ENCODE measurements at regions of chr6 and their contacts with region 1.

Region 1: GRCh38 chr6:27374824-27375612 is 13.5 kb upstream of the ZNF391 start:
- DNase-seq: peak; percentile 86 to 87
- H3K4me3 ChIP-seq: peak overlapping the region; percentile 88
- H3K27ac ChIP-seq: peak overlapping the region; percentile 40
- H3K4me1 ChIP-seq: peaks cover 11% of the 10 kb centered on the region
- H3K27me3 ChIP-seq: no peaks in the 10 kb centered on the region
- CTCF ChIP-seq: no peak

Region 2: DNA sequence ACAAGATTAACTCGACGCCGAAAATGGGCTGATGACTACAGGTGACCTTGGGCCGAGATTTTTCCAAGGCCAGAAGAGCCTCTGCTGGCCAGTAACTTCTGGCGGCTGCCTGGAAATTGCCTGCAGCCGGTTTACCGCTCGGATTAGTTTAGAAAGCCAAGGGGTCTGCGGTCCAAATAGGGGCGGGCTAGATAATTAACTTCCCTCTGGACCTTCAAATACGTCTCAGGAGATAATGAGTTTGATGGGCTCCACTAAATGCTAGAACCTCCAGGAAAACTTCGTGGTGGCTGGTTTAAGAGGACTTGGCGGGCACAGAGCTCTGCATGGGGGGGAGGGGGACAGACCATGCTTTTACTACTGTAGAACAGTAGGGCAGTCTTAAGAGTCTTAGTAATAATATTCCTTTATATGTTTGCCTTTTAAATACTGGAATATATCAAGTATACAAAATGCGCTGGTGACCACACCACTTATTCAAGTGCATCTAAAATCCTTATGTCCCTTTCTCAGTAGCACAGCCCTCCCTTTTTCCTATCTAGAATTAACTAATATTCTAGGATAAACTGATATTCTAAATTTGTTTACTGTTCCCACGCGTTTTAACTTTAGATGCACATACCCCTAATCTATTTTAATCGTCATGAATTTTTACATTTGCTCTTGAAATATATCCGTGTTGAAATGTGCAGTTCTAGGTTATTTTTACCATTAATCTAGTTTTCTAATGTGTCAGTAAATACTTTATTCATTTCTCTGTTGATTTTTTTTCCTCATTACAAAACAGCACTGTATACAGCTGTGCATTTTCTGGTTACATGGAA is 235.1 kb before region 1 on chr6:
- CTCF ChIA-PET with region 1: no interaction called
- POLR2A ChIA-PET with region 1: interaction called, 15 read pairs
- intact Hi-C with region 1: no loop called
- DNase-seq: no peak
- H3K4me3 ChIP-seq: peak overlapping the region; percentile 60
- H3K27ac ChIP-seq: peak overlapping the region; percentile 53
- H3K4me1 ChIP-seq: peaks cover 18% of the 10 kb centered on the region
- H3K27me3 ChIP-seq: no peaks in the 10 kb centered on the region
- CTCF ChIP-seq: no peak

Region 3: DNA sequence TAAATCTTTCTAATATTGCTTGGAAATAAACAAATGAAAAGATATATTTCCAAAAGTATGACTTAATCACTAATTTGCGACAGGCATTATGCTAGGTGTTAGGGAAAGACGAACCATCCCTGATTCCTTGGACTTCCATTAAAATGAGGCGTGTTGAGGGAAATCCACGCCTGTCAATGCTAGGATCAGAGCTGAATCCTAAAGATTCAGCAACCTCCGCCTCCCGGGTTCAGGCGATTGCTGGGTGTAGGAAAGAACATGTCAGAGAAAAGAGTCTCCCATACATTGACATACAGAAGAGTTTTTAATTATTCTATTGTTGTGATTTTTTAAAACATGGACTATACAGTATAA is 144.3 kb before region 1 on chr6:
- CTCF ChIA-PET with region 1: no interaction called
- POLR2A ChIA-PET with region 1: no interaction called
- intact Hi-C with region 1: no loop called
- DNase-seq: peak; percentile 25 to 41
- H3K4me3 ChIP-seq: peak overlapping the region; percentile 53
- H3K27ac ChIP-seq: peak overlapping the region; percentile 22; the same call in 1 of the 2 replicates
- H3K4me1 ChIP-seq: peaks cover 9% of the 10 kb centered on the region; the same call in 1 of the 2 replicates
- H3K27me3 ChIP-seq: no peaks in the 10 kb centered on the region
- CTCF ChIP-seq: no peak

Region 4: DNA sequence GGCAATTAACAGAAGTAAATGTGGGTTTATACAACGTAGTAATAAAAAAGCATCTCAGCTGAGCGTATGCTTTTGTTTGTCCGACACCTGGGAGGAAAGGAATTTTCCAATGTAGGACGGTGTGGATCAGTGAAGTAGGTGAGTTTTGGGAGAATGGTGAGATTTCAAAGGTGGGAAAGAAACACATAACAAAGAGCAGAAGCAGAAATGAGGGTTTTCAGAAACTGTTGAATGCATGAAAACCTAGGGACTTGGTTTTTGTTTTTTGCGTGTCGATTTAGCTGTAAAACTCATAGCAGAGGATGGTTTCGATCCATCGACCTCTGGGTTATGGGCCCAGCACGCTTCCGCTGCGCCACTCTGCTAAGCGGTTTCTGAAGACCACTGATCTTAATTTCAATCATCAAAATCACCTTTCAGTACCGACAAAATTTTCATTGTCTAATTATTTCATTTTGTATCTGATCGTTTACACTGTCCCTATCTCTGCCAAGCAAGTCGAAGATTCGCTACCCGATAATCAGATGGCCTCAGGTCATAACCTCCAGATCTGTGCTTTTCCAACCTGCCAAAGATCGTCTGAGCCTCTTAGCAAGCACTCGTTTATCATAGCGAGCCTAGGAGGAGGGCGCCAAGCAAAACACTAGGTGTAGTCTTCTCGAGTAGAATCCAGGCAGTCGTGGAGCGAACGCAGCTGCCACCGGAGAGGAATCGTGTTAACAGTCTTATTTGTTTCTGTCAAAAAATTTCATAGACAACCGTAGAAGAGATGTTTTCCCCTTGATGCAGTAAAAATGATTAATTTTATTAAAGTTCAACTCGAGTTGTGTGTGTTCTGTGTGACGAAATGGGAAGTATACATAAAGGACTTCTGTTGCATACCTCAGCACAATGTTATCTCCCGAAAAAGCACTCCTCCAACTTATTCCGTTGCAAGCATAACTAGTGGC is 42.1 kb before region 1 on chr6:
- CTCF ChIA-PET with region 1: interaction called, 3 read pairs
- POLR2A ChIA-PET with region 1: no interaction called
- intact Hi-C with region 1: loop called (anchors 2 kb)
- DNase-seq: peak; percentile 62 to 72
- H3K4me3 ChIP-seq: peak overlapping the region; percentile 82
- H3K27ac ChIP-seq: 0 out of 2 replicates have a peak overlapping the region, but pooled peaks have one; percentile 21
- H3K4me1 ChIP-seq: peaks cover 10% of the 10 kb centered on the region; the same call in 1 of the 2 replicates
- H3K27me3 ChIP-seq: no peaks in the 10 kb centered on the region
- CTCF ChIP-seq: no peak

Region 5: GRCh38 chr6:27388293-27389197 is 13.5 kb after region 1 on chr6 and contains the start of gene ZNF391:
- CTCF ChIA-PET with region 1: no interaction called
- POLR2A ChIA-PET with region 1: no interaction called
- intact Hi-C with region 1: loop called (anchors 2 kb)
- DNase-seq: peak; percentile 66 to 76
- H3K4me3 ChIP-seq: peak within 1 kb of the TSS; percentile 65
- H3K27ac ChIP-seq: peak within 1 kb of the TSS; percentile 37
- H3K4me1 ChIP-seq: peaks cover 8% of the 10 kb centered on the region; the same call in 1 of the 2 replicates
- H3K27me3 ChIP-seq: no peaks in the 10 kb centered on the region
- CTCF ChIP-seq: no peak
- total RNA-seq, gene ZNF391: 4.6 and 4.7 TPM in 2 replicates

Region 6: DNA sequence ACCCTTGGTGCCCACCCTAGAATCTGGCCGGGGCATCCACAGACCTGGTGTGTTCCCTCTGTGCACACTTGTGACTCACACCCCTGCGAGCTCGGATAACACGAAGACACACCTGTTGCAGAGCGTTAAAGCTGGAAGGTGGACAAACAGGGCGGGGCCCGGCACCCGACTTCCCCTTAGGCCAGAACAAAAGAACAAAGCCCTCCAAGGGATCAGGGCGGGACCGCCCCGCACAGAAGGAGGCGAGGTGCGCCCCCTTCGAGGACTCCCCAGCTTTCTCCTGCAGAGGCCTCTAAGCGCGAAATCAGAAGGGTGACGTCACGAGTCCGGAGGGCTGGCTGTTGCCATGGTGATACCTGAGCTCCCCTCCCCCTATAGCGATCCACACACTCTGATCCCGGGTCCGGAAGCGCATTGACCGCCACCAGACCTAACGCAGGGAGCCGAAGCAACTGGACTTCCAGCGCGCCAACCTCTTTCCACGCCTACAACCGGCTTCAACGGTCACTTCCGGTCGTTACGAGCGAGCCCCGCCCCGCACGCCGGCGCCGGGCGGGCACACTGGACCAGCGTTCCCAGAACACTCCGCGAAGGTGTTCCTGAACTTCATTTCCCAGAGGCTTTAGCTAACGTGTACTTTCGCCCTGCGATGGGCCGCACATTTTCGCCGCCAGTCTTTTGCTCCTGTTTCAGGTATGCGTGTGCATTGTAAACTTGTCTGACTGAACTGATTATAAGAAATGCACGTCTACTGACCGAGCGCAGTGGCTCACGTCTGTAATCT is 97.8 kb after region 1 on chr6 and contains the start of gene ZNF184:
- CTCF ChIA-PET with region 1: no interaction called
- POLR2A ChIA-PET with region 1: no interaction called
- intact Hi-C with region 1: no loop called
- DNase-seq: peak; percentile 94 to 98
- H3K4me3 ChIP-seq: peak within 1 kb of the TSS; percentile 91
- H3K27ac ChIP-seq: peak within 1 kb of the TSS; percentile 79
- H3K4me1 ChIP-seq: peaks cover 12% of the 10 kb centered on the region; the same call in 1 of the 2 replicates
- H3K27me3 ChIP-seq: no peaks in the 10 kb centered on the region
- CTCF ChIP-seq: peak; percentile 19; the same call in 1 of the 2 replicates
- total RNA-seq, gene ZNF184: 7.0 and 8.8 TPM in 2 replicates

Region 7: GRCh38 chr6:27503436-27504030 is 128.5 kb after region 1 on chr6:
- CTCF ChIA-PET with region 1: no interaction called
- POLR2A ChIA-PET with region 1: no interaction called
- intact Hi-C with region 1: no loop called
- DNase-seq: peak; percentile 66 to 75
- H3K4me3 ChIP-seq: peak overlapping the region; percentile 73
- H3K27ac ChIP-seq: peak overlapping the region; percentile 57
- H3K4me1 ChIP-seq: peaks cover 26% of the 10 kb centered on the region
- H3K27me3 ChIP-seq: no peaks in the 10 kb centered on the region
- CTCF ChIP-seq: no peak